ENCODE measurements at regions of chr1 and their contacts with region 1.

Region 1: GRCh38 chr1:40107290-40108262 is 10.5 kb upstream of the PPT1 start:
- DNase-seq: peak; percentile 79 to 99
- H3K4me3 ChIP-seq: peak overlapping the region; percentile 34; the same call in 1 of the 2 replicates
- H3K27ac ChIP-seq: peak overlapping the region; percentile 87
- H3K4me1 ChIP-seq: peaks cover 64% of the 10 kb centered on the region
- H3K27me3 ChIP-seq: no peaks in the 10 kb centered on the region
- CTCF ChIP-seq: no peak

Region 2: GRCh38 chr1:40130892-40131291 is 23.3 kb after region 1 on chr1:
- CTCF ChIA-PET with region 1: no interaction called
- POLR2A ChIA-PET with region 1: no interaction called
- intact Hi-C with region 1: loop called (anchors 1 kb)
- DNase-seq: peak; percentile 35 to 96
- H3K4me3 ChIP-seq: no peak overlapping the region
- H3K27ac ChIP-seq: peak overlapping the region; percentile 60
- H3K4me1 ChIP-seq: peaks cover 20% of the 10 kb centered on the region
- H3K27me3 ChIP-seq: no peaks in the 10 kb centered on the region
- CTCF ChIP-seq: no peak